Motor neuron (in vitro differentiated cells): ENCODE measurements at regions of chrX and their contacts with region 1.

Region 1: DNA sequence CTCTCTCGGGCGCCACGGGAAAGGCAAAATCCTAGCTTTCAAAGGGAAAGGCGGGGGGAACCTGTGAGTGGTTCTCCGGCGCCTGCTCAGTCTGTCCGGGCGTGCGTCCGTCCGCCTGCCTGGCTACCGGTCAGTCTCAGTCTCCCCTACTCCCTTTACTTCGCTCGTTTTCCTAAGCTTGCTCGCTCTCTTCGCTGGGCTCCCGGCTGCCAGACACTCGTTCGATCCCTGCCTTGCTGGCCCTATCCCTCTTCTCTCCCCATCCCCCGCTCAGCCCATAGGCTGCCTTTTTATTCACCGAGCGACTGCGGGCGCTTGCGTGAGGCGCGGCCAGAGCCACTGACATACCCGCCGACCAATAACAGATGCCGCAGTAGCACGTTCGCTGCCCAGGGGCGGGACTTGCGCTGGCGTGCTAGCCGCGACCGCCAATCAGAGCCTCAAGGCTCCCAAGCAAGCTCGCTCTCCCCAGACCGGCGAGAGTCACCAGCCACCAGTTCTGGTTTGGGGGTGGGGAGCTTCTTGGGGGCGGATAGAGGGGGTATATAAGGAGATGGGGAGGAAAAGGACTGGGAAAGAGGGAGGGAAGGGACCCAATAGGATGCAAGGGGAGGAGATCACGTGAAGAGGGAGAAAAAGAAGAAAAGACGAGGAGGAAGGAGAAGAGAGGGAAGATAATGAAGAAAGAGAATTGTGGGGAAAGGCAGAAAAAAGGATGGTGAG is 30.0 kb downstream of the ARHGEF9 start:
- ATAC-seq: peak; percentile 94 to 97 (median 96)
- H3K4me3 ChIP-seq: peak overlapping the region; percentile 55 to 80 (median 60)
- H3K27ac ChIP-seq: peak overlapping the region; percentile 90 to 94
- H3K4me1 ChIP-seq: peaks cover 16 to 20% of the 10 kb centered on the region in 2 donors

Region 2: DNA sequence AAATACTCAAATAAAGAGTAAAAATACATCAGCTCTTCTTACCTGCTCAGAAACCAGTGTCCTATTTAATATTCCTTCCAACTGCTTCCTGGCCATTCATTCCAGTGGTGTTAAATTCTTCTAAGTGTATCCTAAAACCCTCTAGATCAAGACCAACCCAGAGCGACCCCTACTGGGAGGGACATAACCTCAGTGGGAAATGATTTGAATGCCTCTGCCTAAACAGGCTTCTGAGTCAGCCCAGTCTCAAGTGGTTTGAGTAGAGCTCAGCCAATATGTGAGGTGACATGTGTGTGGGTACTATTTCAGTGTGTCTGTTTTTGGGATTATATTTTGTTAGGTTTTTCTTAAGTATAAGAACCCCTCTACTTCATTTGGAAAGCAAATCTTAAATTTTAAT is 163.6 kb after region 1 on chrX:
- in situ Hi-C with region 1: loop called in 1 of 9 experiments (anchors 25 kb)
- ATAC-seq: peak in 1 of 8 experiments; percentile 70
- H3K4me3 ChIP-seq: no peak overlapping the region
- H3K27ac ChIP-seq: no peak overlapping the region
- H3K4me1 ChIP-seq: no peaks in the 10 kb centered on the region